A673 (cell line): ENCODE measurements at regions of chr5 and their contacts with region 1.

Region 1: DNA sequence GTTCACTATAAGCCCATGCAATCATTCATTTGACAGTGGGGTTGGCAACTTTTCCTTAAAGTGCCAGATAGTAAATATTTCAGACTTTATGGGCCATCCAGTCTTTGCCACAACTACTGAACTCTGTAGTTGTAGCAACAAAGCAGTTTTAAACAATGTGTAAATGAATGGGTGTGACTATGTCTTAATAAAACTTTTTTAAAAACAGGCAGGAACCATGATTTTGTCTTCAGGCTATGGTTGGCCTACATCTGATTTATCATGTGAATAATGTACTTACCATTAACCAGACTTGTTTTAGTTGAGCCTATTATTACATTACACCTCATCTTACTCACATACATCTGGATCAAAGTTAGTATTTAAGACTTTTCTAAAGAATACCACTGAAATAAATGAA is 361.6 kb downstream of the GABRG2 start:
- DNase-seq: no peak
- H3K4me3 ChIP-seq: no peak overlapping the region
- H3K27ac ChIP-seq: no peak overlapping the region
- H3K4me1 ChIP-seq: no peaks in the 10 kb centered on the region
- H3K27me3 ChIP-seq: no peaks in the 10 kb centered on the region
- CTCF ChIP-seq: no peak

Region 2: DNA sequence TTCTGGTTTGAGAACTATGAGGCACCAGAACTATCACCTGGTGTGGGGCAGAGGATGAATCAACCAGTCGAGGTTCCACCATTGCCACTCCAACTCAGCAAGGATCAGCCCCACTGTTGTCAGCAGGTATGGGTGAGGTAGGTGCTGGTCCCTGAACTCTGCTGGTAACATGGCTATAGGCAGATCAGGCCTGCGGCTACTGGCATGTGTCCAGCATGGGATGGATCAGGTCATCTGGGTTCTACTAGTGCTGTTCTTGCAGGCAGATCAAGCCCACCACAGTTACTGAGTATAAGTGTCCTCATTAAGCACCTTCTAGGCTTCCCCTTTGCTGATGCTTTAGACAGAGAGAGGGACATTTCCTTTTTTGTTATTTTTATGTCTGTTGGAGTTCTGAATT is 671.9 kb before region 1 on chr5:
- CTCF ChIA-PET with region 1: no interaction called
- POLR2A ChIA-PET with region 1: interaction called, 12 read pairs
- intact Hi-C with region 1: no loop called
- DNase-seq: no peak
- H3K4me3 ChIP-seq: no peak overlapping the region
- H3K27ac ChIP-seq: no peak overlapping the region
- H3K4me1 ChIP-seq: no peaks in the 10 kb centered on the region
- H3K27me3 ChIP-seq: no peaks in the 10 kb centered on the region
- CTCF ChIP-seq: no peak

Region 3: GRCh38 chr5:162209005-162209605 is 220.0 kb before region 1 on chr5:
- CTCF ChIA-PET with region 1: no interaction called
- POLR2A ChIA-PET with region 1: no interaction called
- intact Hi-C with region 1: no loop called
- DNase-seq: peak; percentile 66
- H3K4me3 ChIP-seq: no peak overlapping the region
- H3K27ac ChIP-seq: no peak overlapping the region
- H3K4me1 ChIP-seq: no peaks in the 10 kb centered on the region
- H3K27me3 ChIP-seq: no peaks in the 10 kb centered on the region
- CTCF ChIP-seq: peak; percentile 54

Region 4: DNA sequence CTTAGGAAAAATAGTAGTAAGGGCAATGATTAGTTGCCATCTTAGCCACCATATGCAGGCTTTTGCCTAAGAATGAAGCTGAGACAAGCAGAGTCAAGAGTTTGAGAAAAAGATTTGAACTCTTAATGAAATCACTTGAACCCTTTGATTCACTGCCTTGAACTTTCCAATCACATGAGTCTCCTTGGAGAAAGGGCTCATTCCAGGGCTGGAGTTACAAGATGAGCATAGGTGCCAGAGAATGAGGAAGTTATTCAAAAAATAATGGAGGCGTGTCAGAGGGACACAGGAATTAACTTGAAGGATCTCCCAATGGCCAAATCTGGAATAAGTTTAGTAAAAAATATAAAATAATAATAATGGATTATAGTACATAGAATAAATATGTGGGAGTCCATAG is 1111.6 kb after region 1 on chr5:
- CTCF ChIA-PET with region 1: no interaction called
- POLR2A ChIA-PET with region 1: no interaction called
- intact Hi-C with region 1: no loop called
- DNase-seq: no peak
- H3K4me3 ChIP-seq: no peak overlapping the region
- H3K27ac ChIP-seq: no peak overlapping the region
- H3K4me1 ChIP-seq: no peaks in the 10 kb centered on the region
- H3K27me3 ChIP-seq: peaks cover 14% of the 10 kb centered on the region
- CTCF ChIP-seq: no peak